ENCODE measurements at regions of chr15 and their contacts with region 1.

Region 1: GRCh38 chr15:96158938-96159337 is 171.6 kb upstream of the NR2F2 start:
- DNase-seq: no peak
- ATAC-seq: no peak
- H3K4me3 ChIP-seq: no peak overlapping the region
- H3K4me3 Mint-ChIP-seq: no peak overlapping the region
- H3K27ac ChIP-seq: no peak overlapping the region
- H3K27ac Mint-ChIP-seq: no peak overlapping the region
- H3K4me1 ChIP-seq: no peaks in the 10 kb centered on the region
- H3K4me1 Mint-ChIP-seq: no peaks in the 10 kb centered on the region
- H3K27me3 ChIP-seq: peaks cover 0 to 2% of the 10 kb centered on the region in 2 experiments
- H3K27me3 Mint-ChIP-seq: peaks cover 4 to 19% of the 10 kb centered on the region in 2 donors

Region 2: DNA sequence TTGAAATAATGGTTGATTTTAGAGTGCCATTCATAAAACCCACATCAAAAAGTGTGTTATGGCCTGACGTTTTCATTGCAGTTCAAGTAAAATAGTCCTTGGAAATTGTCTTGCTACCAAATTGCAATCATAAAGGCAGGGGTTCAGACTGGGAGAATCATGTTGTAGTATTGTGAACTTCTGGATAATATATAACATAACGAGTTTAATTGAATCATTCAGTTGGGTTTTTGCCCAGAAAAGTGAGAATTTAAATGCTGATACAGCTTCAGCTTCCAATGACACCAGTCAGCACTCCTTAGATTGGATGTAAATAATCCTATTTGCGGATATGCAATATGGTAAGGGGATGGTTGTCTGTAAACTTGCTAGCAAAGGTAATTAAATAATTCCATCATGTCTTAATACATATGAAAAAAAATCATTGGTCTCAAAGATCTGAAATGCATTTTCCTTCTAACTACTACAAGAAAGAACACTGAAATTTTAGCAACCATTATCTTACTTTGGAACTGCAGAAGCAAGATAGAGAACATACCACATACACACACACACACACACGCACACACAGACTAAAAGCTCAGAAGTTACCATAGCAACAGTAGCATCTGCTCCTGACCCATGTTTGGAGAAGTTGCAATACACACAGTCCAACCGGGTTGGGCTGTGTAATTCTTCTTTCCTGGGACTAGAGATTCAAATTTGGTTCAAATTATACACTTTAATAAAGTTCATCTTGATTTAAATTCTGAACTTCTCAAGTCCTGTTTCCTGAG is 514.6 kb before region 1 on chr15:
- CTCF ChIA-PET with region 1: no interaction called
- POLR2A ChIA-PET with region 1: interaction called in 1 of 2 experiments, 11 read pairs
- DNase-seq: no peak
- ATAC-seq: no peak
- H3K4me3 ChIP-seq: no peak overlapping the region
- H3K4me3 Mint-ChIP-seq: no peak overlapping the region
- H3K27ac ChIP-seq: no peak overlapping the region
- H3K27ac Mint-ChIP-seq: no peak overlapping the region
- H3K4me1 ChIP-seq: no peaks in the 10 kb centered on the region
- H3K4me1 Mint-ChIP-seq: no peaks in the 10 kb centered on the region
- H3K27me3 ChIP-seq: no peaks in the 10 kb centered on the region
- H3K27me3 Mint-ChIP-seq: peaks cover 3 to 5% of the 10 kb centered on the region in 2 donors

Region 3: GRCh38 chr15:96170979-96171739 is 12.2 kb after region 1 on chr15:
- CTCF ChIA-PET with region 1: no interaction called
- POLR2A ChIA-PET with region 1: no interaction called
- DNase-seq: no peak
- ATAC-seq: no peak
- H3K4me3 ChIP-seq: no peak overlapping the region
- H3K4me3 Mint-ChIP-seq: no peak overlapping the region
- H3K27ac ChIP-seq: no peak overlapping the region
- H3K27ac Mint-ChIP-seq: no peak overlapping the region
- H3K4me1 ChIP-seq: no peaks in the 10 kb centered on the region
- H3K4me1 Mint-ChIP-seq: no peaks in the 10 kb centered on the region
- H3K27me3 ChIP-seq: peaks cover 0 to 9% of the 10 kb centered on the region in 2 experiments
- H3K27me3 Mint-ChIP-seq: peaks cover 22 to 24% of the 10 kb centered on the region in 2 donors